Panc1 (cell line): ENCODE measurements at regions of chr9 and their contacts with region 1.

Region 1: GRCh38 chr9:130254752-130255630 is 10.6 kb upstream of the HMCN2 start:
- DNase-seq: no peak
- ATAC-seq: no peak
- H3K4me3 ChIP-seq: no peak overlapping the region
- H3K27ac ChIP-seq: no peak overlapping the region
- H3K4me1 ChIP-seq: no peaks in the 10 kb centered on the region
- H3K27me3 ChIP-seq: peaks cover 3% of the 10 kb centered on the region; the same call in 1 of the 2 replicates
- CTCF ChIP-seq: no peak

Region 2: GRCh38 chr9:130287736-130288135 is 32.7 kb after region 1 on chr9:
- CTCF ChIA-PET with region 1: interaction called, 13 read pairs
- POLR2A ChIA-PET with region 1: no interaction called
- in situ Hi-C with region 1: no loop called
- intact Hi-C with region 1: no loop called
- DNase-seq: no peak
- ATAC-seq: no peak
- H3K4me3 ChIP-seq: no peak overlapping the region
- H3K27ac ChIP-seq: no peak overlapping the region
- H3K4me1 ChIP-seq: no peaks in the 10 kb centered on the region
- H3K27me3 ChIP-seq: peaks cover 11% of the 10 kb centered on the region
- CTCF ChIP-seq: no peak

Region 3: GRCh38 chr9:130327070-130327780 is 72.2 kb after region 1 on chr9:
- CTCF ChIA-PET with region 1: interaction called, 10 read pairs
- POLR2A ChIA-PET with region 1: no interaction called
- in situ Hi-C with region 1: no loop called
- intact Hi-C with region 1: no loop called
- DNase-seq: no peak
- ATAC-seq: peak; percentile 65
- H3K4me3 ChIP-seq: no peak overlapping the region
- H3K27ac ChIP-seq: no peak overlapping the region
- H3K4me1 ChIP-seq: no peaks in the 10 kb centered on the region; the same call in 1 of the 2 replicates
- H3K27me3 ChIP-seq: peaks cover 2% of the 10 kb centered on the region; the same call in 1 of the 2 replicates
- CTCF ChIP-seq: no peak; the same call in 1 of the 2 replicates

Region 4: GRCh38 chr9:130918870-130919558 is 664.0 kb after region 1 on chr9:
- CTCF ChIA-PET with region 1: no interaction called
- POLR2A ChIA-PET with region 1: no interaction called
- in situ Hi-C with region 1: no loop called
- intact Hi-C with region 1: no loop called
- DNase-seq: no peak
- ATAC-seq: no peak
- H3K4me3 ChIP-seq: no peak overlapping the region
- H3K27ac ChIP-seq: no peak overlapping the region
- H3K4me1 ChIP-seq: no peaks in the 10 kb centered on the region
- H3K27me3 ChIP-seq: no peaks in the 10 kb centered on the region
- CTCF ChIP-seq: no peak